ENCODE measurements at regions of chr16 and their contacts with region 1.

Region 1: DNA sequence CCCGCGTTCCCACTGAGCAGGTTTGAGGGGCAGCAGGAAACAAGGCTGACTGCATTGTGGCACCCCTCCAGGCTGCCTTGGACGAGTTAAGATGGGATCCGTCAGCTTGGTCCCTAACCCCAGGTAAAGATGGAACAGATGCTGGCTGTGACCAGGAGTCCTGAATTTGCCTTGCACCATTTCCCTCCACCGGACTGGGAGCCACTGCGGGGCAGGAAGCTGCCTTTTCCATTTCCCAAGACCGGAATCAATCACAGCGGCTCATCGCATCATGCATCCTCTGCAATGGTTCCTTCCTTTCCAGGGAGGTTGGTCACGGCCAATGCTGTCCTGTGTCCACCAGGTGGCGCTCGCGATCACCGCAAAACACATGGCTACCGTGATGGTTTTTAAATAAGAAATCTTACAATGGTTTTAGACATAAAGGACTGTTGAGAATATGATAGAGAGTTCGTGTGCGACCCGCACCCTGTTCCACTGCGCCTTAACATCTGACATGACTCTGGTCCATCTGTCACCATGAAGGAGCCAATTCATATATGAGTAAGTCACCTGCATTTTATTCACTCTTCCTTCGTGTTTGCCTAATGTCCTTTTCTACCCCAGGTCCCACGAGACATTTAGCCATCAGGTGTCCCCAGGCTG is 6.8 kb upstream of the MEAK7 start:
- DNase-seq: peak; percentile 83 to 92 (median 91)
- ATAC-seq: peak; percentile 71 to 73
- H3K4me3 ChIP-seq: no peak overlapping the region
- H3K27ac ChIP-seq: no peak overlapping the region
- H3K4me1 ChIP-seq: no peaks in the 10 kb centered on the region
- H3K27me3 ChIP-seq: no peaks in the 10 kb centered on the region

Region 2: DNA sequence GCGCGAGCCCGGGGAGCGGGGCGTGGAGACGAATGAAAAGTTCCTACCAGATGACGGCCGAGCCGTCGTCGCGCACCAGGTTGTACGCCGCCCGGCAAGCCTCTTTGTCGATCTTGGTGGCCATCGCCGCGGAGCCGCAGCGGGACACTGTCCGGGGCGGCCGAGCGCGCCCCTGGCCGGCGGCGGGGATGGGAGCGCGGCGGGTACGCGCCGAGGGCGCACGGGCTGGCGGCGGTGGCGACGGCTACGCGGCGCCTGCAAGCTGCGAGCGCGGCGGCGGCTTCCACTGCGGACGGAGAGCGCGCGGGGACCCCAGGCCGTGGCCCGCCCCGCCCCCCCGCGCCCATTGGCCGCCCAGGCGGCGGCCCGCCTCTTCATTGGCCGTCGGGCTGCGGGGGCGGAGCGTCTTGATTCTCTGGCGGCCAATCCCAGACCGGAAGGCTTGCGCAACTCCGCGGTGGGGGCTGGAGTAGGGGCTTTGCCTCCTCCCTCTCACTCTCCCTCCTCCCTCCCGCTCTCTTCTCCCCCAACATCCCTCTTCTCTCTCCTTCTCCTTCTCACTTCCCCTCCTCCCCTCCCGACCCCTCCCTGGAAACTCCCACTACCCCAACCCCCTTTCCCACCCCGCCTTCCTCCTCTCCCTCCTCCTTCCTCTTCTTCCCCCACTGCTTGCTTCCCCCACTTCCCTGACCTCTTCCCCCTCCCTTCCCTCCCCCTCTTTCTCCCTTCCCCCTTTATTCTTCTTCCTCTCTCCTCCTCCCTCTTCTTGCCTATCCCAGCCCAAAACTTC is 106.7 kb after region 1 on chr16 and contains the start of gene COTL1:
- intact Hi-C with region 1: loop called (anchors 2 to 5 kb)
- DNase-seq: peak; percentile 98 to 99 (median 99)
- ATAC-seq: peak; percentile 93 to 94
- H3K4me3 ChIP-seq: peak within 1 kb of the TSS; percentile 77
- H3K27ac ChIP-seq: peak within 1 kb of the TSS; percentile 53
- H3K4me1 ChIP-seq: no peaks in the 10 kb centered on the region
- H3K27me3 ChIP-seq: no peaks in the 10 kb centered on the region
- total RNA-seq, gene COTL1: 12.7 to 26.9 (median 23.5) TPM

Region 3: DNA sequence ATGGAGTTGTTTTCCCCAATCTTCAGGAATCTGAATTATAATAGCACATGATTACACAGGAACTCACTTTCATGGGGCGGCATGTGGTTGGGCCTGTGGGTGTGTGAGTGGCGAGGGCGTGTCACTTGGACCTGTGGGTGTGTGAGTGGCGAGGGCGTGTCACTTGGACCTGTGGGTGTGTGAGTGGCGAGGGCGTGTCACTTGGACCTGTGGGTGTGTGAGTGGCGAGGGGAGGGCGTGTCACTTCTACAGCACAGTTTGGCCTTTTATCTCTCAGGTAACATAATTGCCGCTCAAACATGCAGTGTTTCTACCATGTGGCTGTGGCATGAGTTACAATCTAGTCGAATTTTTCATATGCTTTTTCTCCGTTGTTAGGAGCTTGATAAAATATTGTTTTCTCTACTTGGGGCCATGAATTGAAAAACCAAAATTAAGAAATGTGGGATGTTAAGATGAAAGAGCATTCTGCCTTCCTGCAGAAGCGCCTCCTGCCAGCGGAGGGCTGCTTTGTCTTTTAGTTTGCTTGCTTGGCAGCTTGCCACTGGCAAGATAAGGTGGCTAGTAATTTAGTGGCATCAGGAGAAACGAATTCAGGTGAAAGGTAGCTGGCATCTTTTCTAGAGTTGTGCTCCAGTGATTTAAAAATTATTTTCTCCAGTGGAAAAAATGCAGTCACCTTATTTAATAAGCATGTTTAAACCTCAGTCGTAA is 224.7 kb after region 1 on chr16:
- intact Hi-C with region 1: loop called in 1 of 4 experiments (anchors 2 kb)
- DNase-seq: no peak
- ATAC-seq: no peak
- H3K4me3 ChIP-seq: no peak overlapping the region
- H3K27ac ChIP-seq: no peak overlapping the region
- H3K4me1 ChIP-seq: peaks cover 4% of the 10 kb centered on the region
- H3K27me3 ChIP-seq: no peaks in the 10 kb centered on the region